IMR-90 (cell line): ENCODE measurements at regions of chr10 and their contacts with region 1.

Region 1: GRCh38 chr10:49734661-49735071 is 27.5 kb downstream of the OGDHL start:
- DNase-seq: no peak
- ATAC-seq: no peak
- H3K4me3 ChIP-seq: no peak overlapping the region
- H3K27ac ChIP-seq: no peak overlapping the region
- H3K4me1 ChIP-seq: no peaks in the 10 kb centered on the region
- H3K27me3 ChIP-seq: no peaks in the 10 kb centered on the region
- CTCF ChIP-seq: no peak
- POLR2A ChIP-seq: no peak
- RAD21 ChIP-seq: no peak

Region 2: GRCh38 chr10:49144058-49144720 is 590.5 kb before region 1 on chr10:
- CTCF ChIA-PET with region 1: no interaction called
- POLR2A ChIA-PET with region 1: no interaction called
- dilution Hi-C with region 1: no loop called
- in situ Hi-C with region 1: no loop called
- intact Hi-C with region 1: no loop called
- DNase-seq: peak; percentile 81
- ATAC-seq: peak; percentile 61
- H3K4me3 ChIP-seq: no peak overlapping the region
- H3K27ac ChIP-seq: peak overlapping the region; percentile 77
- H3K4me1 ChIP-seq: peaks cover 44% of the 10 kb centered on the region
- H3K27me3 ChIP-seq: no peaks in the 10 kb centered on the region
- CTCF ChIP-seq: no peak
- POLR2A ChIP-seq: no peak
- RAD21 ChIP-seq: no peak

Region 3: DNA sequence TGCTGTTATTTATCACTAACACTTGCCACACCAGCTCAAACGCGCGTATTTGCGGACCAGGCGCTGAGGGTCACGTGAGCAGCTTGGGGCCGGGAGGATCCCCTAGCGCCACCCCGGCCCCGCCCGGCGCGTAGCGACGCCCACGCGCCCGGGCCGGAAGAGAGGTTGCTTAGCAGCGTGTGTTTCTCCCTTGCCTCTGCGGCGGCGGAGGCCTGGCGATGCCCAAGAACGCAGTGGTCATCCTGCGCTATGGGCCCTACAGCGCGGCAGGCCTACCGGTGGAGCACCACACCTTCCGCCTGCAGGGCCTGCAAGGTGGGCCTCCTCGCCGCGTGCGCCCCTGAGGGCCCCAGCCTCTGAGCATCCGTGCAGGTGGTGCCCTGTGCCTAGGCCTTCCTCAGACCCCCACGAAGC is 55.2 kb before region 1 on chr10 and contains the start of gene C10orf53:
- CTCF ChIA-PET with region 1: no interaction called
- POLR2A ChIA-PET with region 1: no interaction called
- dilution Hi-C with region 1: no loop called
- in situ Hi-C with region 1: no loop called
- intact Hi-C with region 1: loop called (anchors 2 kb)
- DNase-seq: peak; percentile 16
- ATAC-seq: peak; percentile 82
- H3K4me3 ChIP-seq: no peak within 1 kb of the TSS
- H3K27ac ChIP-seq: no peak within 1 kb of the TSS
- H3K4me1 ChIP-seq: no peaks in the 10 kb centered on the region
- H3K27me3 ChIP-seq: no peaks in the 10 kb centered on the region
- CTCF ChIP-seq: no peak
- POLR2A ChIP-seq: no peak
- RAD21 ChIP-seq: no peak
- total RNA-seq, gene C10orf53: not detected in 2 replicates